Dendritic cell treated with granulocyte-macrophage colony-stimulating factor and Interleukin-4, amounts not matched to agents 40 ng/mL and 50 ng/mL, for 4 days (primary cell): ENCODE measurements at regions of chr6 and their contacts with region 1.

Region 1: DNA sequence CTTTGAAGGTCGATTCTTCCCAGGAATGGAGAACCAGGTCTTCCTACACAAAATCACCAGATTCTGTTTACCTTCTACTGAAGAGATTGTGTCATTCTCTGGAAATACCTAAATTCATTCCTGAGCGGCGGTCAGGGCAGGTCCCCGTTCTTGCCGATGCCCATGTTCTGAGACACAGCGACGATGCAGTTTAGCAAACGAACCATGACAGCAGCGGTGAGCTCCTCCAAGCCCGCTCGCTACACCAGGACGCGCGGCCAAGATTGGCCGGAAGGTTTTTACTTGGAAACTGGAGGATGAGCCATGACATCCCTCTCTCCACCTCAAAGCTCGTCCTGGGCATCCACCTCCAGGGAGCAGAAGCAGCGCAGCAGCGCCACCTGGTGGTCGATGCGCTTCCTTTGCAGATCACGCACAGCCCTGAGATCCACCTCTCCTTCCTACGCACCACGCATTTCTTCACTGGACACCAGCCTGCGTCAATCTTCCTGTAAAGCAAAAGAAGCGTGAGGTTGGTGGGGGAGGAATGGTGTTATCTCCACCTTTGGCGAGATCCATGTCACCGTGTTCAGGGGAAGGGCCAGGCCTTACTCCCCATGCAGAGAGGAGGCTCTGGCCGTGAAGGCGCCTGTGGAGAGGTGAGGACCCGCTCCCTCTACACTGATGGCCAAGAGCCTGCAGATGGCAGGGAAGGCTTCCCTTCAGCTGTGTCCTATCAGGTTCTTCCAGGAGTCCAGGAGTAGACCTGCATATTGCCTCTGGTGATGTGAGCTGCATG is 9.9 kb upstream of the HLA-B start:
- H3K4me3 Mint-ChIP-seq: peak overlapping the region; percentile 60
- H3K27ac Mint-ChIP-seq: no peak overlapping the region
- H3K4me1 Mint-ChIP-seq: peaks cover 16% of the 10 kb centered on the region
- H3K27me3 Mint-ChIP-seq: peaks cover 37% of the 10 kb centered on the region

Region 2: GRCh38 chr6:31068669-31069340 is 298.1 kb before region 1 on chr6:
- intact Hi-C with region 1: no loop called
- H3K4me3 Mint-ChIP-seq: no peak overlapping the region
- H3K27ac Mint-ChIP-seq: no peak overlapping the region
- H3K4me1 Mint-ChIP-seq: no peaks in the 10 kb centered on the region
- H3K27me3 Mint-ChIP-seq: peaks cover 5% of the 10 kb centered on the region

Region 3: GRCh38 chr6:31139599-31139998 is 227.3 kb before region 1 on chr6:
- intact Hi-C with region 1: loop called (anchors 2 kb)
- H3K4me3 Mint-ChIP-seq: no peak overlapping the region
- H3K27ac Mint-ChIP-seq: no peak overlapping the region
- H3K4me1 Mint-ChIP-seq: peaks cover 8% of the 10 kb centered on the region
- H3K27me3 Mint-ChIP-seq: peaks cover 11% of the 10 kb centered on the region

Region 4: GRCh38 chr6:31252625-31253024 is 114.3 kb before region 1 on chr6:
- intact Hi-C with region 1: no loop called
- H3K4me3 Mint-ChIP-seq: no peak overlapping the region
- H3K27ac Mint-ChIP-seq: no peak overlapping the region
- H3K4me1 Mint-ChIP-seq: no peaks in the 10 kb centered on the region
- H3K27me3 Mint-ChIP-seq: peaks cover 15% of the 10 kb centered on the region

Region 5: GRCh38 chr6:31308845-31309175 is 58.1 kb before region 1 on chr6:
- intact Hi-C with region 1: no loop called
- H3K4me3 Mint-ChIP-seq: peak overlapping the region; percentile 66
- H3K27ac Mint-ChIP-seq: no peak overlapping the region
- H3K4me1 Mint-ChIP-seq: peaks cover 15% of the 10 kb centered on the region
- H3K27me3 Mint-ChIP-seq: peaks cover 48% of the 10 kb centered on the region